Activated T-helper 1 cell treated with anti-CD3 and anti-CD28 coated beads, Interleukin-12 subunit alpha, Interleukin-12 subunit beta, Interleukin-2, Interleukin-4 antibody, amounts not matched to agents 30 ng/mL and 10 ng/mL and 1 ng/mL, durations not matched to agents 14 hours and 24 hours and 36 hours (primary cell): ENCODE measurements at regions of chr19 and their contacts with region 1.

Region 1: DNA sequence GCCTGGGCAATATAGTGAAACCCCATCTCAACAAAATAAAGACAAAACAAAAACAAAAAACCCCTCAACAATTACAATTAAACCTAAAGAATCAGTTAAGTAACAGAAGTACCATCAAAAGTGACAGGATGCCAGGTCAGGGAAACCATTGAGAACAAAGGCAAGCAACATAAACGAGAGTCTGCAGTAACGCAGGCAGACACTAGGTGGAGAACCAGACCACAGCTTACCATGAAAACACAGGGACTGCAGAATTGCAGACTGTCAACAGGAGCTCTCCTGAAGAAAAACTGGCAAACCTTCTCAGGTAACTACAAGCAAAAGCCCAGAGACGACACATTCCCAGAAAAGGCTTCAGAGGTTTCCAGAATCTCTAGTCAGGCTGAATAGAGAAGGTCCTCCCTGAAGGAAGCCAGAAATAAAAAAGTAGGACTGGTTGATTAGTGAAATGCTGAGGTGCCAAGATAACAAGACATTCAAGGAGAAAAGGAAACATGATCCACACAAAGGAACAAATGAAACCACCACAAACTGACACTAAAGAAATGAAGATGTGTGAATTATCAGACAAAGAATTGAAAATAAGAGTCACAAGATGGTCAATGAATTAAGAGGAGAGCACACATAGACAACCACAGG is 2.2 kb upstream of the ZNF665 start:
- DNase-seq: peak; percentile 65
- H3K4me3 Mint-ChIP-seq: peak overlapping the region; percentile 46
- H3K27ac Mint-ChIP-seq: no peak overlapping the region
- H3K4me1 Mint-ChIP-seq: peaks cover 32% of the 10 kb centered on the region
- H3K27me3 Mint-ChIP-seq: no peaks in the 10 kb centered on the region

Region 2: GRCh38 chr19:52248241-52248640 is 947.1 kb before region 1 on chr19:
- intact Hi-C with region 1: loop called (anchors 10 kb)
- DNase-seq: peak; percentile 12
- H3K4me3 Mint-ChIP-seq: no peak overlapping the region
- H3K27ac Mint-ChIP-seq: no peak overlapping the region
- H3K4me1 Mint-ChIP-seq: no peaks in the 10 kb centered on the region
- H3K27me3 Mint-ChIP-seq: no peaks in the 10 kb centered on the region

Region 3: DNA sequence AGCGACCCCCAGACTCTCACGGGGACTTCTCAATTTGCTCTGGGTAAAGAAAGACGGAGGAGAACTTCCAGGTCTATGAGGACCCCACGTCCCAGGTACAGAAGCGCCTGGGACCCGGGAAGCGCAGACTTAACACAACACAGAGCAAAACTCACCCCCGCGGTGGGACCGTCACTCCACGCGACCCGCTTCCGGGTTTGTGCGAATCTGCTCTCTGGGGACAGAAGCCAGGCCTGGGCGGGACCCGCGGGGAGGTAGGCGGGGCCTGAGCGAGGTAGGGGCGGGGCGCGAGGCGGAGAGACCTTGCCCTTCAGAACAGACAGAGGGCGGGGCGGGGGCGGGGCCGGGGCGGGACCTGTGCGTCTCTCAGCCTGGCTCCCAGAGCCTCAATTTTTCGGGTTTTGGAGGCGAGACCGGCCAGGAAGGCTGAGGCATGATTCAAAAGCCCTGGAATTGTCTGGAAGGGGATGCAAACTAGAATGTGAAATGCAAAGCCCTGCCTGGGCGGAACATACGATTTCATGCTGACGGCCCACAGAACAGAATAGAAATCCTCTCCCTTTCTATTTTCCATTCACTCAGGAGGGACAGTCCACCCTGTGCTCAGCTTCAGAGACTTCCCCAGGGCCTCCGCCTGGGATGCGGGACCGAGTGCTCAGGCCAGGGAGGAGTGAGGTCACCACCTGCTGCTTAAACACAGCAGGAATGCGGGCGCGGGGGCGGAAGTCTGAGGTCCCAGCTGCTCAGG is 252.8 kb before region 1 on chr19:
- intact Hi-C with region 1: loop called (anchors 1 kb)
- DNase-seq: peak; percentile 94
- H3K4me3 Mint-ChIP-seq: peak overlapping the region; percentile 89
- H3K27ac Mint-ChIP-seq: peak overlapping the region; percentile 88
- H3K4me1 Mint-ChIP-seq: peaks cover 27% of the 10 kb centered on the region
- H3K27me3 Mint-ChIP-seq: peaks cover 2% of the 10 kb centered on the region

Region 4: GRCh38 chr19:53172892-53173291 is 22.5 kb before region 1 on chr19:
- intact Hi-C with region 1: no loop called
- DNase-seq: no peak
- H3K4me3 Mint-ChIP-seq: no peak overlapping the region
- H3K27ac Mint-ChIP-seq: no peak overlapping the region
- H3K4me1 Mint-ChIP-seq: no peaks in the 10 kb centered on the region
- H3K27me3 Mint-ChIP-seq: no peaks in the 10 kb centered on the region

Region 5: GRCh38 chr19:53333463-53334449 is 138.4 kb after region 1 on chr19 and contains the start of gene ZNF845:
- intact Hi-C with region 1: loop called (anchors 1 kb)
- DNase-seq: peak; percentile 95
- H3K4me3 Mint-ChIP-seq: peak within 1 kb of the TSS; percentile 91
- H3K27ac Mint-ChIP-seq: peak within 1 kb of the TSS; percentile 80
- H3K4me1 Mint-ChIP-seq: peaks cover 10% of the 10 kb centered on the region
- H3K27me3 Mint-ChIP-seq: no peaks in the 10 kb centered on the region
- total RNA-seq, gene ZNF845: 6.5 and 6.7 TPM in 2 replicates

Region 6: DNA sequence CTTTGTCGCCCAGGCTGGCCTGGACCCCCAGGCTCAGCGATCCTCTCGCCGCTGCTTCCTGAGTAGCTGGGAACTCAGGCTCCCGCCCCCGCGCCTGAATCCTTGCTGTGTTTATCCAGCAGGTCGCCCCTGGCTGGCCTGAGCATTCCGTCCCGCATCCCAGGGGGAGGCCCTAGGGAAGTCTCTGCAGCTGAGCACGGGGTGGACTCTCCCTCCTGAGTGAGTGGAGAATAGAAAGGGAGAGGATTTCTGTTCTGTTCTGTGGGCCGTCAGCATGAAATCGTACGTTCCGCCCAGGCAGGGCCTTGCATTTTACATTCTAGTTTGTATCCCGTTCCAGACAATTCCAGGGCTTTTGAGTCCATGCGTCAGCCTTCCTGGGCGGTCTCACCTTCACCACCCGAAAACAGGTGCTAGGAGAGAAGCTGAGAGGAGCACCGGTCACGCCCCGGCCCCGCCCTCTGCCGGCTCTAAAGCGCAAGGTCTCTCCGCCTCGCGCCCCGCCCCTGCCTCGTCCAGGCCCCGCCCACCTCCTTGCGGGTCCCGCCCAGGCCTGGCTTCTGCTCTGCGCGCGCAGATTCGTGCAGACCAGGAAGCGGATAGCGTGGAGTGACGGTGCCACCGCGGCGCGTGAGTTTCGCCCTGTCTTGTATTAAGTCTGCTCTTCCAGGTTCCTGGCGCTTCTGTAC is 236.2 kb after region 1 on chr19 and contains the start of gene ZNF761:
- intact Hi-C with region 1: loop called (anchors 1 kb)
- DNase-seq: peak; percentile 96
- H3K4me3 Mint-ChIP-seq: peak within 1 kb of the TSS; percentile 88
- H3K27ac Mint-ChIP-seq: peak within 1 kb of the TSS; percentile 94
- H3K4me1 Mint-ChIP-seq: peaks cover 25% of the 10 kb centered on the region
- H3K27me3 Mint-ChIP-seq: no peaks in the 10 kb centered on the region
- total RNA-seq, gene ZNF761: 9.9 and 12.3 TPM in 2 replicates

Region 7: DNA sequence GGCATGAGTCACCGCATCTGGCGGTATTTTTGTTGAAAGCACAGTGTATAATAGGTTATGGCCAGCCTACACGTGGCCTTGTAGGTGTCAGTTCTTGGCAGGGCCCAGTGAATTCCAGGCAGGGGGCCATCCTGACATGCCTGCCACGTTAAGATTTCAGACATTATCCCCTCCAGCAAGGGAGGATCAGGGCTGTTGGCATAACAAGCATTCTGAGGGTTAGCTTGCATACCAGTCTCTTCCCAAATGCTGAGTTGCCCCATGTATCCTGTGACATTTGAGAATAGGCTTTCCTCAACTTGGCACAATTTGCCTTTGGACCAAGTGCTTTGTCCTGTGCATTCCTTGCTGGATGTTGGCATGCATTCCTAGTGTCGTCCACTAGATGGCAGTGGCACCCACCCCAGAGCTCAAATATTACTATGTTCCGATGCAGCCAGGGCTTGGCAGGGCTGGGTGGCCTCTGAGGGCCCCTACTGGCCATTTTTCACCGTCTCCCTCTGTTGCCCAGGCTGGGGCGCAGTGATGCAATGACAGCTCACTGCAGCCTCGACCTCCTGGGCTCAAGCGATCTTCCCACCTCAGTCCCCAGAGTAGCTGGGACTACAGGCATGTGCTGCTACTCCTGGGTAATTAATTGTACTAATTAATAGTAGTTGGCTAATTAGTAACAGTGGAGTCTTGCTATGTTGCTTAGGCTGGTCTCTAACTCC is 597.5 kb after region 1 on chr19:
- intact Hi-C with region 1: loop called (anchors 1 kb)
- DNase-seq: peak; percentile 69
- H3K4me3 Mint-ChIP-seq: no peak overlapping the region
- H3K27ac Mint-ChIP-seq: no peak overlapping the region
- H3K4me1 Mint-ChIP-seq: no peaks in the 10 kb centered on the region
- H3K27me3 Mint-ChIP-seq: no peaks in the 10 kb centered on the region